ENCODE measurements at regions of chr2 and their contacts with region 1.

Region 1: GRCh38 chr2:27264753-27265535 is 2.1 kb upstream of the SLC30A3 start:
- DNase-seq: peak; percentile 82 to 96
- ATAC-seq: peak; percentile 77 to 82
- H3K4me3 ChIP-seq: peak overlapping the region; percentile 75
- H3K27ac ChIP-seq: peak overlapping the region; percentile 32 to 73; a peak in 5 of 6 replicates
- H3K4me1 ChIP-seq: peaks cover 21% of the 10 kb centered on the region
- CTCF ChIP-seq: peak; percentile 71
- EP300 ChIP-seq: no peak
- POLR2A ChIP-seq: no peak
- RAD21 ChIP-seq: peak; percentile 40 to 59; a peak in 4 of 5 replicates

Region 2: DNA sequence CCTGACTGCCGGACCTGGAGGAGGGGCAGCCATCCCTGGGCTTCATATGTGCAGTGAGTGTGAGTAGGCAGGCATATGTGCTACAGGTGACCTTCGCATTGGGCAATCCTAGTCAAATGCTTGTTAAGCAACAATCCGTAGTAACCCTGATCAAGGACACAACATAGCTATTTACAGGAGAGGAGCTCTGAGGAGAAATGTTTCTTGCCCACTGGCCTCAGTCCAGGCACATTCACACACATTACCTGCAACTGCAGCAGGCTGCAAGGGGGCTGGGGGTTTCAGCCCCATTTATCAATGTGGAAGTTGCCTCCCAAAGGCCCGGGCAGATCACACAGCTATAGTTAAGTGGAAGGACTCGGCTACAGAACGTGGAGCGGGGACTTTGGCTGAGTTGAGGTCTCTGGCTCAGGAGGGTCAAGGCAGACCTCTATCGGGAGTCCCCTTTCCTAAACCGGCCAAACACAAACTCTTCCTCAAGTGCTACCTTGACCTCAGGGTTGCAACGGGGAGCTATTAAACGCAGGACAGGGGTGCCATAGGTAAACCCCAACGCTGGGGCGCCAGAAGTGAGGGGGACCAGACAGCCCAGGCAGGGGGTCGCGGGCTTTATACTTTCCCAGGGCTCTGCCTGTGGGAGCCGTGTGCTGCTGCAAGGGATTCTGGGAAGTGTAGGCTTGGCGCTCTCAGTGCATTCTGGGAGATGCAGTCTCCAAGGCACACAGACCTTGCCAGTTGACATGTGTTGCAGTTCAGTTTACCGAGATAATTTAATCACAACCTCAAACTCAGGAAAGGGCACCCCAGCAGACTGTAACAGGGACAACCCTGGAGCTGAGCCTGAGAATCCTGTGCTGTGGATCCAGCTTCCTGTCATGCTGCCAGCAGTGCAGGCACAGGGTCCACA is 168.9 kb before region 1 on chr2:
- CTCF ChIA-PET with region 1: interaction called, 16 read pairs
- POLR2A ChIA-PET with region 1: no interaction called
- DNase-seq: peak; percentile 56 to 80
- ATAC-seq: peak; percentile 67 to 85
- H3K4me3 ChIP-seq: no peak overlapping the region
- H3K27ac ChIP-seq: peak overlapping the region; percentile 46 to 71; a peak in 5 of 6 replicates
- H3K4me1 ChIP-seq: peaks cover 20% of the 10 kb centered on the region
- CTCF ChIP-seq: no peak
- EP300 ChIP-seq: no peak
- POLR2A ChIP-seq: no peak
- RAD21 ChIP-seq: no peak

Region 3: GRCh38 chr2:27217217-27218121 is 47.5 kb before region 1 on chr2 and contains the start of gene CAD:
- CTCF ChIA-PET with region 1: interaction called, 10 read pairs
- POLR2A ChIA-PET with region 1: no interaction called
- DNase-seq: peak; percentile 84 to 92
- ATAC-seq: peak; percentile 88 to 92
- H3K4me3 ChIP-seq: peak within 1 kb of the TSS; percentile 65
- H3K27ac ChIP-seq: peak within 1 kb of the TSS; percentile 94 to 95
- H3K4me1 ChIP-seq: peaks cover 28% of the 10 kb centered on the region
- CTCF ChIP-seq: no peak
- EP300 ChIP-seq: no peak
- POLR2A ChIP-seq: peak; percentile 90
- RAD21 ChIP-seq: no peak
- polyA plus RNA-seq, gene CAD: 50.5 and 61.8 TPM in 2 replicates

Region 4: GRCh38 chr2:27233341-27233740 is 31.6 kb before region 1 on chr2:
- CTCF ChIA-PET with region 1: interaction called, 43 read pairs
- POLR2A ChIA-PET with region 1: no interaction called
- DNase-seq: no peak
- ATAC-seq: no peak
- H3K4me3 ChIP-seq: no peak overlapping the region
- H3K27ac ChIP-seq: no peak overlapping the region
- H3K4me1 ChIP-seq: no peaks in the 10 kb centered on the region
- CTCF ChIP-seq: no peak
- EP300 ChIP-seq: no peak
- POLR2A ChIP-seq: no peak
- RAD21 ChIP-seq: no peak

Region 5: DNA sequence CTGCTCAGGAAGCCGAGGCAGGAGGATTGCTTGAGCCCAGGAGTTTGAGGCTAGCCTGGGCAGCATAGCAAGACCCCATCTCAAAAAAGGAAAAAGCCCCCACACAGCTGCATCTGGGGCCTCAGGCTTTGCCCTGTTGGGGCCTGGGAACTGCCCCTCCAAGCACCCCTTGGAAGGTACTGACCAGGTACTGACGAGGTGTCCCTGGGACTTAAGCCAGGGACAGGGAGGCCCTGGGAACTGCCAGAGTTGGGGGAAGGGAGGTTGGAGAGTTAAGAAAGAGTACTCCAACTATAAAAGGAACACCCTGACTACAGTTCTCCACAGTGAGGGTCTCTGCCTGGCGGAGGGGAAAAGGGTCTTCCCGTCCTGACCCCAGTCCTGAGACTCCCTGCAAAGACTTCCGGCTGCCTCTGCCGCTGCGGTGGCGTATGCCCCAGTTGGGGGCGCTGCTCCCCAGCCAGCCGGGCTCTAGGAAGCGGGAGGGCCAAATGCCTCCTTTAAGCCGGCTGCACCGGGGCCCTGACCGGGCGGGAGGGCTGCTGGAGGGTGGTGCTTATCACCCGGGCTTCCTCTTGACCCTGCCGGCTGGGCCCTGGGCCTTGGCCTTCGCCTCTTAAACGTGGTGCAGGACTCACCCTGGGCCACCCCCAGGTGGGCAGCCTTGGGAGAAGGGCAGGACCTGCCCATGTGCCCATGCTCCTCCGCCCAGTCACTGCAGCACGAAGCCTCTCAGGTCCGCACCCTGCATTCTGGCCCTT is 14.9 kb before region 1 on chr2:
- CTCF ChIA-PET with region 1: interaction called, 27 read pairs
- POLR2A ChIA-PET with region 1: no interaction called
- DNase-seq: peak; percentile 65 to 79
- ATAC-seq: peak; percentile 71 to 87
- H3K4me3 ChIP-seq: no peak overlapping the region
- H3K27ac ChIP-seq: peak overlapping the region; percentile 11 to 62; a peak in 3 of 6 replicates
- H3K4me1 ChIP-seq: peaks cover 15% of the 10 kb centered on the region
- CTCF ChIP-seq: peak; percentile 84
- EP300 ChIP-seq: no peak
- POLR2A ChIP-seq: no peak
- RAD21 ChIP-seq: peak; percentile 89 to 91

Region 6: GRCh38 chr2:27308359-27308881 is 43.5 kb after region 1 on chr2 and contains the start of gene UCN:
- CTCF ChIA-PET with region 1: interaction called, 196 read pairs
- POLR2A ChIA-PET with region 1: no interaction called
- DNase-seq: no peak
- ATAC-seq: no peak
- H3K4me3 ChIP-seq: no peak within 1 kb of the TSS
- H3K27ac ChIP-seq: no peak within 1 kb of the TSS
- H3K4me1 ChIP-seq: no peaks in the 10 kb centered on the region
- CTCF ChIP-seq: no peak
- EP300 ChIP-seq: no peak
- POLR2A ChIP-seq: no peak
- RAD21 ChIP-seq: no peak
- polyA plus RNA-seq, gene UCN: 1.0 TPM in 2 replicates

Region 7: GRCh38 chr2:28469304-28469703 is 1204.4 kb after region 1 on chr2:
- CTCF ChIA-PET with region 1: no interaction called
- POLR2A ChIA-PET with region 1: no interaction called
- DNase-seq: no peak
- ATAC-seq: peak; percentile 48 to 53; a peak in 4 of 6 replicates
- H3K4me3 ChIP-seq: no peak overlapping the region
- H3K27ac ChIP-seq: 0 out of 6 replicates have a peak overlapping the region, but pooled peaks of 1 of the 2 experiments have one; percentile 1
- H3K4me1 ChIP-seq: peaks cover 13% of the 10 kb centered on the region; the same call in 2 of the 3 replicates
- CTCF ChIP-seq: no peak
- EP300 ChIP-seq: no peak
- POLR2A ChIP-seq: no peak
- RAD21 ChIP-seq: no peak

Measured in A549 (cell line).